ENCODE measurements at regions of chr6 and their contacts with region 1.

Region 1: DNA sequence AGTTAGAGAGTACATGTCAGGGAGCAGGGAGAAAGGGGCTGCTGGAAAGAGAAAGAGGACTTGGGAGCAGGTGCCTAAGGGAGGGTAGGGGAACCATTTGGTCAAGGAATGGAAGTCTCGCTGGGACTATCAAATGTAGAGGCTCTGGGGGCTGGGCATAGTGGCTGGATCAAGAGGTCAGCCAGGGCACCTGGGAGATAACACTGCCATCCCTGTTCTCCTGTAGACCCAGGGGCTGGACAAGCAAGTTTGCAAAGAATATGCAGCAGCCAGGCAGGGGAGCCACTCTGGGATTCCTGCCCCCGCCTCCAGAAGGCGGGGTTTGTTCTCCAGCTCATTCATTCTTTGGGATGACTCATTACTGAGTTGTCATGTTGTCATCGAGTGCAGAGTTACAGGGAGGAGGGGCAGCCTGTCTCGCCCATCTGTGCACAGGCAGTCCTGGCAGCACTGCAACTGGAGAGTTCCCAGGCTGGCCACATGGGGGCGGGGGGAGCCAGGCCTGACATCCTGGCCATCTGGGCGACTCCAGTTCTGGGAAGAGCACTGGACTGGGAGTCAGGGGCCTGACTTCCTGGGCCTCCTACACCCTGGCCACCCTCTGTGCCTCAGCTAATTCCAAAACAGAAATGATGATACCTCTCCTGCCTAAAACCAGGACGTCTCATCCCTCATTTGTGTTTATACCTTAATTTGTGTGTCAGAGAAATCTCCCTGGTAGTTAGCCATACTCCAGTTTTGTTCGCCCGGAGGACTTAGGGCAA is 28.2 kb upstream of the ZFAND3 start:
- DNase-seq: peak; percentile 95
- ATAC-seq: peak; percentile 99

Region 2: DNA sequence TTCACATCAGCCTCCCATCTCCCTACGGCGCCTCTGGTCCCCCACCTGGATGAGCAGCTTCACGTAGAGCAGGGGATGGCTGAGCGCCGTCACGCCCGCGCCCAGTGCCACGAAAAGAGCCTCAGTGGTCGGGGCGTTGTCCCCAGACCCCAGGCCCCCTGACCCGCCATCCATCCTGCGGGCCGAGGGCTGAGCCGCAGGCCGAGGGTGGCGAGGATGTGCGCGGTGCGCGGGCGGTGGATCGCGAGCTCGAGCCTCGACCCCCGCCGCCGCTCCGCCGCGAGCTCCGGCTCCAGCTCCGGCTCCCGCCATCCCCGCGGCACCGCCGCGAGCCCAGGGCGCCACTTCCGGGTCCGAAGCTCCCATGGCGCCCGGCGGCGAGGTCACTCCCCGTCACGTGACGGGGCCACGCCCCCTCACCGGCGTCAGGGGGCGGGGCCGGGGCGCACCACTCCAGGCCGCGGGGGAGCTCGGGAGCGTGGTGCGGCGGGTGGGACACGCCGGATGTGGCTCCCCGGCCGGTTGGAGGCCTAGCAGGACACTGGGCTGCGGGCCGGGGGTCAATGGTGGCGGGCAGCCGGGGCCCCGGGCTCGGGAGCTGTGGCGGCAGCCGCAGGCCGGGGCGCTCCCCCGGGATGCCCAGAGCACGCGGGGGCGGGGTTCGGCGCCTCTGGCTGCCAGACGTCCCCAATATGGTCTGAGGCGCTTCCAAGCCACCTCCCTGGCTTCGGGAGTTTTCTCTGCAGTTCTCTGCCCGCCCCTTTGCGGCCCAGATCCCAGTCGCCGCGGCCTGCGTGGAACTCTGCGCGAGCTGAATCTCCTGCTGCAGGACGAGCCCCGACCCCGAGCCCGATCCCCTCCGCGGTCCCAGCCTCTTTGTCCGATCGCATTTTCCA is 805.3 kb before region 1 on chr6 and contains the start of gene MTCH1:
- intact Hi-C with region 1: no loop called
- DNase-seq: peak; percentile 94
- ATAC-seq: peak; percentile 97
- total RNA-seq, gene MTCH1: 205 TPM

Region 3: DNA sequence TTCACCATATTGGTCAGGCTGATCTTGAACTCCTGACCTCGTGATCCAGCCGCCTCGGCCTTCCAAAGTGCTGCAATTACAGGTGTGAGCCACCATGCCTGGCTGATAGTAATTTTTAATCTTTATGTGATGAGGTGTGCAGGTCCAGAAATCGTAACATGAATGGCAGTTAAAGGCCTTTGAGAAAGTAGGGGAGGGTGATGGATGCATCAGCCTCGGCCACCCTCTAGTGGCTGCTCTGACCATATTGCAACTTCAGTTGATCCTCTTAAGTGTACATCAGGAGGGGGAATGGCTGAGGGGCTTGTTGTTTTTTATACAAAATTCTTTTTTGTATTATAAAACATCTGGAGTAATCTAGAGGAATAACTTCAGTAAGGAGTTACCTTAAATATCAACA is 221.2 kb after region 1 on chr6:
- intact Hi-C with region 1: loop called (anchors 5 kb)
- DNase-seq: no peak
- ATAC-seq: peak; percentile 83

Measured in Right ventricle myocardium superior (tissue), 1 donor.